ENCODE measurements at regions of chr6 and their contacts with region 1.

Region 1: DNA sequence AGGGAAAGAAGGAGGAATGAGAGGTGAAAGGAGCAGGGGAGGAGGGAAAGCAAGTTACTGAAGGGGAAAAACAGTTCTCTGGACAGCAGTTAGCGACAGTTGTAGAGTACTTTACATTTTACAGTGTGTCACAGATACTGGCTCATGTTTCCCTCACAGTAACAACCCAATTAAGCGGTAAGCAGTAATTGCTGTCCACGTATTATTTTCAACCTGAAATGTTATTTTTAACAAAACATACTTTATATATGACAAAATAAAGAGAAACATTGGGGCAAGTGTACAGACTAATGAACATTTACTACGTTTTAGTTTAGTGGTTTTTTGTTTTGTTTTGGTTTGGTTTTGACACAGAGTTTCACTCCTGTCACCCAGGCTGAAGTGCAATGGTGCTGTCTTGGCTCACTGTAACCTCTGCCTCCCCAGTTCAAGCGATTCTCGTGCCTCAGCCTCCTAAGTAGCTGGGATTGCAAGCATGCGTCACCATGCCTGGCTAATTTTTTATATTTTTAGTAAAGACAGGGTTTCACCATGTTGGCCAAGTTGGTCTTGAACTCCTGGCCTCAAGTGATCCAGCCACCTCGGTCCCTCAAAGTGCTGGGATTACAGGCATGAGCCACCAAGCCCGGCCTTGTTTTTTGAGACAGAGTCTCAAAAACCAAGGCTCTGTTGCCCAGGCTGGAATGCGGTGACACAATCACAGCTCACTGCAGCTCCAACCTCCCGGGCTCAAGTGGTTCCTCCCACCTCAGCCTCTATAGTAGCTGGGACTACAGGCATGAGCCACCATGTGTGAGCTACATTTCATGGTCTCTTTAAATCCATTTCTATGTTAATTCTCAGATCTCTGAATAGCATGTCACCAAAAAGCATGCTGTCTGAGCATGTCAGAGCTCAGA is 22.6 kb upstream of the BTN3A2 start:
- DNase-seq: no peak
- ATAC-seq: peak; percentile 4
- H3K4me3 ChIP-seq: peak overlapping the region; percentile 38
- H3K4me3 Mint-ChIP-seq: peak overlapping the region; percentile 55 to 91 (median 70)
- H3K27ac ChIP-seq: no peak overlapping the region
- H3K27ac Mint-ChIP-seq: peak overlapping the region in 2 of 9 donors; percentile 8 to 70
- H3K4me1 ChIP-seq: peaks cover 0 to 3% of the 10 kb centered on the region in 2 donors
- H3K4me1 Mint-ChIP-seq: peaks cover 0 to 22% (median 8%) of the 10 kb centered on the region in 7 donors
- H3K27me3 ChIP-seq: no peaks in the 10 kb centered on the region
- H3K27me3 Mint-ChIP-seq: peaks cover 0 to 18% (median 0%) of the 10 kb centered on the region in 5 donors

Region 2: DNA sequence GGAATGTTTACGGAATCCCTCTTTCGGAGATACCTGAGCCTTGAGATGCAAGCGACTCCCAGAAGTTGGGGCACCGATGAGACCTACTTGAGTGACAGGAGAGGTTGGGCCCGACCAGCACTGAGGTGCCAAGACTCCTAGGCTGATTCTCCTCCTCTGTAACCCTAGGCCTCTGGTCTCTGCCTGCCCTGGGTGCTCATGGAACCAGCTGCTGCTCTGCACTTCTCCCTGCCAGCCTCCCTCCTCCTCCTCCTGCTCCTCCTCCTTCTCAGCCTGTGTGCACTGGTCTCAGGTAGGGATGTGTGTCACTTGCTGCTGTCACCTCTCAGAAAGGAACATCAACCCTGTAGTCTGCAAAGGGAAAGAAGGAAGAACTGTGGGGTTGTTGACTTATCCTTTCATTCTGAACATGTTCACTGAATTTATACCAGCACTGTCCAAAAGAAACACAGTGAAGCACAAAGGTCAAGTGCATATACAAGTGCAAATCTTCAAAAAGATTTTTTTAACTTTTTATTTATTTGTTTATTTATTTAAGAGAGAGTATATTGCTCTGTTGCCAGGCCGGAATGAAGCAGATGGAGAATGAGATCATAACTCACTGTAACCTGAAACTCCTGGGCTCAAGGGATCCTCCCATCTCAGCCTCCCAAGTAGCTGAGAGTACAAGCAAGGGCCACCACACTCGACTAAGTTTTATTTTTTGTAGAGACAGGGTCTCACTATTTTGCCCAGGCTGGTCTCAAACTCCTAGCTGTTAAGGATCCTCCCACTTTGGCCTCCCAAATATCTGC is 41.5 kb after region 1 on chr6:
- CTCF ChIA-PET with region 1: no interaction called
- POLR2A ChIA-PET with region 1: no interaction called
- intact Hi-C with region 1: loop called (anchors 1 to 5 kb)
- DNase-seq: peak in 1 of 9 donors; percentile 20
- ATAC-seq: peak; percentile 9
- H3K4me3 ChIP-seq: peak overlapping the region; percentile 83
- H3K4me3 Mint-ChIP-seq: peak overlapping the region; percentile 91 to 100 (median 98)
- H3K27ac ChIP-seq: peak overlapping the region; percentile 96
- H3K27ac Mint-ChIP-seq: peak overlapping the region; percentile 81 to 99 (median 95)
- H3K4me1 ChIP-seq: peaks cover 8 to 16% of the 10 kb centered on the region in 2 donors
- H3K4me1 Mint-ChIP-seq: peaks cover 17 to 57% (median 33%) of the 10 kb centered on the region in 7 donors
- H3K27me3 ChIP-seq: no peaks in the 10 kb centered on the region
- H3K27me3 Mint-ChIP-seq: no peaks in the 10 kb centered on the region

Region 3: DNA sequence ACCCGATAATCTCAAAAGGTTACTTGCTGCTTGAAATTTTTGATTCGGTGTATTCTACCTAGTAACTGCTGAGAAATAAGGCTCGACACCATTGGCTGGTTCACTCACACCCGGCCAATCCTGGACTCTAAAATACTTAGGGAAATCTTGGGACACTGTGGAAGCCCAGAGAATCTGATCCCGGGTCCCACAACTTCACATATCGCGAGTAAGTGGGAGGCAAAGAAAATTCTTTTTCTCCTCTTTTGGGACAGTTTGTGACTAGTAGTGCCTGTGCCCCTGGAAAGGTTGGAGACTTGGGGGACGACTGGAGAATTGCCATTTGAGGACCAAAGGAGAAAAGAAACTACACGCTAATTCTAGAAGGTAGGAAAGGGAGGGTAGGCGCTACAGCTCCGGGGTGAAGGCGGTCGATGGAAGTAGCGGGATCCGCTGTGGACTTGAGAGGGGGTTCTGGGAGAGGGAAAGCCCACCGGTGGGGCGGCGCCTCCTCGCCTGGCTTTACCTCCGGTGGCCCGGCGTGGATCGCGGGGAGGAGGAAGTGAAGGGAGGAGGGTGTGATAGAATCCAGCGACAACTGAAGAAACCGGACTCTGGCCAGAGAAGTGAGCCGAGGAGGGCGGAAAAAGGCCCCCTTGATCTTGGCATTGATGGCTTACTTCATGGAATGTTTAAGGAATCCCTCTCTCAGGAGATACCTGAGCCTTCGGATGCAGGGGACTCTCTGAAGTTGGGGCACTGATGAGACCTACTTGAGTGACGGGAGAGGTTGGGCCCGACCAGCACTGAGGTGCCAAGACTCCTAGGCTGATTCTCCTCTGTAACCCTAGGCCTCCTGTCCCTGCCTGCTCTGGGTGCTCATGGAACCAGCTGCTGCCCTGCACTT is 79.1 kb after region 1 on chr6:
- CTCF ChIA-PET with region 1: interaction called, 4 read pairs
- POLR2A ChIA-PET with region 1: no interaction called
- intact Hi-C with region 1: loop called (anchors 1 to 5 kb)
- DNase-seq: peak; percentile 11 to 71 (median 62)
- ATAC-seq: peak; percentile 96
- H3K4me3 ChIP-seq: peak overlapping the region; percentile 79
- H3K4me3 Mint-ChIP-seq: no peak overlapping the region
- H3K27ac ChIP-seq: peak overlapping the region; percentile 71
- H3K27ac Mint-ChIP-seq: peak overlapping the region in 2 of 9 donors; percentile 43 to 79
- H3K4me1 ChIP-seq: peaks cover 5 to 9% of the 10 kb centered on the region in 2 donors
- H3K4me1 Mint-ChIP-seq: peaks cover 0 to 16% (median 3%) of the 10 kb centered on the region in 7 donors
- H3K27me3 ChIP-seq: no peaks in the 10 kb centered on the region
- H3K27me3 Mint-ChIP-seq: no peaks in the 10 kb centered on the region

Region 4: DNA sequence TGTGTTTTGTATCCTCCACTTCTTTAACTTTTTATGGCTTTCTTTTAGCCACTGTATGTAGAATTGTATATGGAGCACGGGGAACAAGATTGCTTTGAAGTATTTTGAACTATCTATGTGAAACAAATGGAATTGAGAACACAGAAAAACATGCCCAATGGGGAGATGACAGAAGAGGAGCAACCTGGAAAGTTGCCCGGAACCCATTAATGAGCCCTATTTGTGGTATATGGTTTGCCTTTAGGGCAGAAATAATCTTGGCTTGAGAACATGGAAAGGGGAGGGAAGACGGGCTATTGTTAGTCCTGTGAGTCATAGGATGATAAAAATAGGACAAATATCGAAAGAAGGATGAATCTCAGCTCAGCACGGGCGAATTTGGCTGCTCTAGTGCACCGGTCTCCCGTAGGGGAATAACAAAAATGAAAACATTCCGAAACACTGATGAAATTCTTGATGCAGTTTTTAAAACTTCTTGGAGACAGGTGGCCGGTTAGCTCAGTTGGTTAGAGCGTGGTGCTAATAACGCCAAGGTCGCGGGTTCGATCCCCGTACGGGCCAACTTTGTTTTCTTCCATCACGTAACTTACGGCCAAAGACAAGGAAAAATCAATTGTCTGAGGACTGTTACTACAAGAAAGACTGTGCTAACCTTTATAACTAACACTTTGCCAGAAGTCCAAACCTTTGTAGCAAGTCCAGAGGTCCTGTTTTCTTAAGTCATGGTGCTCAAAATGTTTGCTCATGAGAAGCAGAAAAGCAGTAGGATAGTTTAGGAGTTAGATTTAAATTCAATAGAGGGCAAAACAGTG is 211.5 kb after region 1 on chr6:
- CTCF ChIA-PET with region 1: interaction called, 4 read pairs
- POLR2A ChIA-PET with region 1: interaction called, 3 read pairs
- intact Hi-C with region 1: loop called (anchors 1 kb)
- DNase-seq: peak; percentile 44 to 86 (median 83)
- ATAC-seq: peak; percentile 66
- H3K4me3 ChIP-seq: peak overlapping the region; percentile 75
- H3K4me3 Mint-ChIP-seq: no peak overlapping the region
- H3K27ac ChIP-seq: peak overlapping the region; percentile 65
- H3K27ac Mint-ChIP-seq: no peak overlapping the region
- H3K4me1 ChIP-seq: peaks cover 7 to 18% of the 10 kb centered on the region in 2 donors
- H3K4me1 Mint-ChIP-seq: peaks cover 12 to 35% (median 24%) of the 10 kb centered on the region in 7 donors
- H3K27me3 ChIP-seq: no peaks in the 10 kb centered on the region
- H3K27me3 Mint-ChIP-seq: peaks cover 0 to 2% (median 0%) of the 10 kb centered on the region in 5 donors

Region 5: DNA sequence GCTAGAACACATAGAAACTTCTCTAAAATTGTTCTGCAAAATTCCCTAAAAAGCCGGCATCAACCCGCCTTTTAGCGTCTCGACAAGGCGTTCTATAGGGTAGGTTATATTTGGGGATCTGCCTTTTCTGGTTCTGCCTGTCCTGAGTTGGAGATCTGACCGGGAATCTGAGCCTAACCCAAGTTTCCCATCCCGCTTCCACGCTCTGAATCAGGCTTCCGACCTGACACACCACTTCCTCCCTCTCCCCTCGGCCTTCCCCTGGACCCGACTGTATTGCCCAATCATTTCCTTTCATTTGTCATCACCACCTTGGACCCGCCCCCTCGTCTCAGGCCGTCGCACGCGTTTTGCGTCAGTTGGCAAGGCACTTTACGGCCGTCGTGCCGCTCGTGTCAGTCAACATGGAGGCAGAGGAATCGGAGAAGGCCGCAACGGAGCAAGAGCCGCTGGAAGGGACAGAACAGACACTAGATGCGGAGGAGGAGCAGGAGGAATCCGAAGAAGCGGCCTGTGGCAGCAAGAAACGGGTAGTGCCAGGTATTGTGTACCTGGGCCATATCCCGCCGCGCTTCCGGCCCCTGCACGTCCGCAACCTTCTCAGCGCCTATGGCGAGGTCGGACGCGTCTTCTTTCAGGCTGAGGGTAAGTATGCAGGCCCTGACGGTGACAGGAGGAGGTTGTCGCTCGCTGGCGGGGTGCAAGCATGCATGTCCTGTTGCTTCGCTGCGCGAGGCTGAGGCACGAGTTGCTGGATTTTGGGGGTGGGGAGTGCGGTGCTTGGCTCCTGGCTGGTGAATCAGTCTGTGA is 254.4 kb after region 1 on chr6 and contains the start of gene ABT1:
- CTCF ChIA-PET with region 1: interaction called, 27 read pairs
- POLR2A ChIA-PET with region 1: interaction called, 4 read pairs
- intact Hi-C with region 1: loop called (anchors 1 kb)
- DNase-seq: peak; percentile 87 to 96 (median 95)
- ATAC-seq: peak; percentile 95
- H3K4me3 ChIP-seq: peak within 1 kb of the TSS; percentile 81
- H3K4me3 Mint-ChIP-seq: no peak within 1 kb of the TSS
- H3K27ac ChIP-seq: peak within 1 kb of the TSS; percentile 89
- H3K27ac Mint-ChIP-seq: peak within 1 kb of the TSS in 1 of 9 donors; percentile 92
- H3K4me1 ChIP-seq: peaks cover 17 to 22% of the 10 kb centered on the region in 2 donors
- H3K4me1 Mint-ChIP-seq: peaks cover 5 to 20% (median 10%) of the 10 kb centered on the region in 7 donors
- H3K27me3 ChIP-seq: peaks cover 8 to 14% of the 10 kb centered on the region in 2 donors
- H3K27me3 Mint-ChIP-seq: peaks cover 3 to 28% (median 16%) of the 10 kb centered on the region in 5 donors
- total RNA-seq, gene ABT1: 23.3 to 37.5 (median 35.0) TPM

Region 6: GRCh38 chr6:28124102-28124970 is 1782.0 kb after region 1 on chr6 and contains the start of gene ZSCAN16:
- CTCF ChIA-PET with region 1: no interaction called
- POLR2A ChIA-PET with region 1: no interaction called
- intact Hi-C with region 1: no loop called
- DNase-seq: peak; percentile 43 to 72 (median 59)
- ATAC-seq: peak; percentile 86
- H3K4me3 ChIP-seq: peak within 1 kb of the TSS; percentile 86
- H3K4me3 Mint-ChIP-seq: peak within 1 kb of the TSS; percentile 80 to 98 (median 95)
- H3K27ac ChIP-seq: peak within 1 kb of the TSS; percentile 93
- H3K27ac Mint-ChIP-seq: peak within 1 kb of the TSS; percentile 83 to 99 (median 96)
- H3K4me1 ChIP-seq: peaks cover 12 to 16% of the 10 kb centered on the region in 2 donors
- H3K4me1 Mint-ChIP-seq: peaks cover 35 to 54% (median 48%) of the 10 kb centered on the region in 7 donors
- H3K27me3 ChIP-seq: no peaks in the 10 kb centered on the region
- H3K27me3 Mint-ChIP-seq: no peaks in the 10 kb centered on the region
- total RNA-seq, gene ZSCAN16: 6.4 to 13.9 (median 7.6) TPM